HepG2 (cell line): ENCODE measurements at regions of chr17 and their contacts with region 1.

Region 1: DNA sequence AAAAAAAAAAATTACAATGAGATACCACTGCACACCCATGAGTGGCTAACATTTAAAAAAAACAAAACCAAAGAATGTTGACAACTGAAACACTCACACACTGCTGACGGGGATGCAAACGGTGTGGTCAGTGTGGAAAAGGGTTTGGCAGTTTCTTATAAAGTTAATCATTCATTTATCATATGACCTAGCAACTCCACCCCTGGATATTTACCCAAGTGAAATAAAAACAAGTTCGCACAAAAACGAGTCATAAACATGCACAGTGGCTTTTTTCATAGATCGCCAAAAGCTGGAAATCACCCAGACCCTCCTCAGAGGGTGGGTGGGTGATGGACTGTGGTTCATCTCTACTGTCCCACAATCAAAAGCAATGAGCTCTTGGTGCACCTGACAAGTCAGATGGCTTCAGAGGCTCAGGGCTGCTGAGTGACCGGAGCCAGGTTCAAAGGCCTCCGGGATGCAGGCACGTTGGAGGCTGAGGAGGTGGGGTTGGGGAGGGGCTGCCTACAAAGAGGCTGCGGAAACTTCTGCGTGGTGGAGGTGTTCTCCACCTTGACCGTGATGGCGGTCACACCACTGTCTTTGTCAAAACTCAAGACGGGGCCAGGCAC is 14.2 kb downstream of the RAB40B start:
- DNase-seq: no peak
- ATAC-seq: no peak
- H3K4me3 ChIP-seq: no peak overlapping the region
- H3K27ac ChIP-seq: no peak overlapping the region
- H3K4me1 ChIP-seq: peaks cover 41% of the 10 kb centered on the region
- H3K27me3 ChIP-seq: no peaks in the 10 kb centered on the region
- CTCF ChIP-seq: no peak
- EP300 ChIP-seq: no peak
- POLR2A ChIP-seq: no peak
- RAD21 ChIP-seq: no peak

Region 2: GRCh38 chr17:82603981-82604448 is 80.3 kb before region 1 on chr17:
- CTCF ChIA-PET with region 1: no interaction called
- POLR2A ChIA-PET with region 1: no interaction called
- in situ Hi-C with region 1: no loop called
- intact Hi-C with region 1: no loop called
- DNase-seq: no peak
- ATAC-seq: no peak
- H3K4me3 ChIP-seq: no peak overlapping the region
- H3K27ac ChIP-seq: no peak overlapping the region
- H3K4me1 ChIP-seq: peaks cover 14% of the 10 kb centered on the region
- H3K27me3 ChIP-seq: no peaks in the 10 kb centered on the region
- CTCF ChIP-seq: no peak
- EP300 ChIP-seq: no peak
- POLR2A ChIP-seq: 0 out of 4 replicates have a peak, but pooled peaks of 1 of the 2 experiments have one; percentile 4
- RAD21 ChIP-seq: no peak

Region 3: GRCh38 chr17:82668631-82669099 is 15.7 kb before region 1 on chr17:
- CTCF ChIA-PET with region 1: interaction called, 3 read pairs
- POLR2A ChIA-PET with region 1: no interaction called
- in situ Hi-C with region 1: no loop called
- intact Hi-C with region 1: loop called (anchors 1 kb)
- DNase-seq: peak; percentile 78
- ATAC-seq: peak; percentile 99
- H3K4me3 ChIP-seq: peak overlapping the region in 1 of 3 experiments; percentile 46; a peak in 3 of 6 replicates
- H3K27ac ChIP-seq: no peak overlapping the region
- H3K4me1 ChIP-seq: peaks cover 17% of the 10 kb centered on the region
- H3K27me3 ChIP-seq: no peaks in the 10 kb centered on the region
- CTCF ChIP-seq: peak; percentile 96
- EP300 ChIP-seq: no peak
- POLR2A ChIP-seq: peak in 1 of 2 experiments; percentile 26; a peak in 1 of 4 replicates
- RAD21 ChIP-seq: peak; percentile 99

Region 4: GRCh38 chr17:82698065-82698973 is 14.0 kb after region 1 on chr17 and contains the start of gene RAB40B:
- CTCF ChIA-PET with region 1: no interaction called
- POLR2A ChIA-PET with region 1: no interaction called
- in situ Hi-C with region 1: no loop called
- intact Hi-C with region 1: no loop called
- DNase-seq: peak; percentile 96
- ATAC-seq: peak; percentile 92
- H3K4me3 ChIP-seq: peak within 1 kb of the TSS; percentile 64 to 85 (median 82)
- H3K27ac ChIP-seq: no peak within 1 kb of the TSS
- H3K4me1 ChIP-seq: peaks cover 54% of the 10 kb centered on the region
- H3K27me3 ChIP-seq: peaks cover 0 to 11% of the 10 kb centered on the region in 2 experiments; a peak in 1 of 5 replicates
- CTCF ChIP-seq: no peak; the same call in 1 of the 2 replicates
- EP300 ChIP-seq: peak in 1 of 2 experiments; percentile 59; a peak in 2 of 4 replicates
- POLR2A ChIP-seq: no peak
- RAD21 ChIP-seq: no peak
- total RNA-seq, gene RAB40B: 4.4 and 6.2 TPM in 2 replicates

Region 5: DNA sequence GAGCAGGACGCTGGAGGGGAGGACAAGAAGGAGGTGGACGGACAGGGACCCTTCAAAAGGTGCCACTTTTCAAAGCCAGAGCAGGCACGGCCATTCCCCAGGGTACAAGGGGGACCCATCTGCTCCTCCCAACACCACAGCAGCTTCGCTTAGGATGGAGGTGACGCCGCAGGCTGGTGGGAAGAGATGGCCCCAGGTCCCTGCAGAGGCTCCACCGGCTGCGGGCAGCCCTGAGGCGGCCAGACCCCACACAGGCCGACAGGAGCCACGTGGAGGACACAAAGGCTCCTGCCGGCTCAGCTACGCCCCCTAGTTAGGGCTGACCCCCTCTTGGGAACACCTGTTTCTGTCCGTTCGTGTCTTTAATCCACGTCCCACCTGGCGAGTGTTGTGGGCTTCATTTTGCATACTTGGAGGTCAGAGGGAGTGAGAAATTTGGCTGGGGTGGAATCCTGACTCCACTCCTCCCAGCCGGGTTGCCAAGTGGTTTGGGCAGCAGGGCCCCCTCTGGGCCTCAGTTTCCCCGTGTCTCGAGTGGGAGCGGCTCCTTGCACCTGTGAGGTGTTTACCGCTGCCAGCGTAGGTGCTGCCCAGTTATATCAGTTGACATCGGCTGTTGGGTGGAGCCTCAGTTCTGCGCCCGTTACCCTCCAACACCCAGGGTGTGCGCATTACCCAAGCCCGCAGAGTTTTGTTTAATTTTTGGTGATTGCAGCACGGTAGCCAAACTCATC is 26.3 kb after region 1 on chr17:
- CTCF ChIA-PET with region 1: interaction called, 4 read pairs
- POLR2A ChIA-PET with region 1: no interaction called
- in situ Hi-C with region 1: no loop called
- intact Hi-C with region 1: loop called (anchors 2 kb)
- DNase-seq: no peak
- ATAC-seq: peak; percentile 13
- H3K4me3 ChIP-seq: peak overlapping the region in 1 of 3 experiments; percentile 20; a peak in 1 of 6 replicates
- H3K27ac ChIP-seq: no peak overlapping the region
- H3K4me1 ChIP-seq: peaks cover 57% of the 10 kb centered on the region
- H3K27me3 ChIP-seq: peaks cover 5 to 21% of the 10 kb centered on the region in 2 experiments; a peak in 3 of 5 replicates
- CTCF ChIP-seq: peak; percentile 67
- EP300 ChIP-seq: no peak
- POLR2A ChIP-seq: no peak
- RAD21 ChIP-seq: peak; percentile 15; the same call in 1 of the 2 replicates

Region 6: GRCh38 chr17:82767041-82767754 is 82.9 kb after region 1 on chr17:
- CTCF ChIA-PET with region 1: interaction called, 26 read pairs
- POLR2A ChIA-PET with region 1: no interaction called
- in situ Hi-C with region 1: no loop called
- intact Hi-C with region 1: loop called (anchors 1 kb)
- DNase-seq: peak; percentile 49
- ATAC-seq: peak; percentile 81
- H3K4me3 ChIP-seq: no peak overlapping the region
- H3K27ac ChIP-seq: no peak overlapping the region
- H3K4me1 ChIP-seq: no peaks in the 10 kb centered on the region
- H3K27me3 ChIP-seq: no peaks in the 10 kb centered on the region
- CTCF ChIP-seq: peak; percentile 85
- EP300 ChIP-seq: no peak
- POLR2A ChIP-seq: no peak
- RAD21 ChIP-seq: peak; percentile 90

Region 7: GRCh38 chr17:82775001-82775823 is 90.9 kb after region 1 on chr17:
- CTCF ChIA-PET with region 1: interaction called, 15 read pairs
- POLR2A ChIA-PET with region 1: no interaction called
- in situ Hi-C with region 1: no loop called
- intact Hi-C with region 1: loop called (anchors 2 kb)
- DNase-seq: peak; percentile 51
- ATAC-seq: peak; percentile 85
- H3K4me3 ChIP-seq: no peak overlapping the region
- H3K27ac ChIP-seq: no peak overlapping the region
- H3K4me1 ChIP-seq: peaks cover 5% of the 10 kb centered on the region
- H3K27me3 ChIP-seq: no peaks in the 10 kb centered on the region
- CTCF ChIP-seq: peak; percentile 99
- EP300 ChIP-seq: no peak
- POLR2A ChIP-seq: no peak
- RAD21 ChIP-seq: peak; percentile 88

Region 8: GRCh38 chr17:82863941-82864774 is 179.8 kb after region 1 on chr17:
- CTCF ChIA-PET with region 1: no interaction called
- POLR2A ChIA-PET with region 1: no interaction called
- in situ Hi-C with region 1: no loop called
- intact Hi-C with region 1: no loop called
- DNase-seq: no peak
- ATAC-seq: no peak
- H3K4me3 ChIP-seq: no peak overlapping the region
- H3K27ac ChIP-seq: no peak overlapping the region
- H3K4me1 ChIP-seq: peaks cover 12% of the 10 kb centered on the region
- H3K27me3 ChIP-seq: no peaks in the 10 kb centered on the region
- CTCF ChIP-seq: no peak
- EP300 ChIP-seq: no peak
- POLR2A ChIP-seq: no peak
- RAD21 ChIP-seq: no peak